Endothelial cell of umbilical vein (primary cell): ENCODE measurements at regions of chr9 and their contacts with region 1.

Region 1: GRCh38 chr9:677461-678097 is 163.9 kb upstream of the DMRT1 start:
- DNase-seq: peak; percentile 74
- H3K4me3 ChIP-seq: peak overlapping the region; percentile 20 to 55 (median 29)
- H3K27ac ChIP-seq: peak overlapping the region; percentile 44
- H3K4me1 ChIP-seq: peaks cover 26% of the 10 kb centered on the region
- H3K27me3 ChIP-seq: no peaks in the 10 kb centered on the region
- CTCF ChIP-seq: no peak
- POLR2A ChIP-seq: peak; percentile 42

Region 2: GRCh38 chr9:517993-518392 is 159.6 kb before region 1 on chr9:
- CTCF ChIA-PET with region 1: no interaction called
- POLR2A ChIA-PET with region 1: no interaction called
- dilution Hi-C with region 1: no loop called
- intact Hi-C with region 1: no loop called
- DNase-seq: no peak
- H3K4me3 ChIP-seq: no peak overlapping the region
- H3K27ac ChIP-seq: no peak overlapping the region
- H3K4me1 ChIP-seq: no peaks in the 10 kb centered on the region
- H3K27me3 ChIP-seq: no peaks in the 10 kb centered on the region
- CTCF ChIP-seq: no peak
- POLR2A ChIP-seq: no peak

Region 3: GRCh38 chr9:751137-752051 is 73.8 kb after region 1 on chr9:
- CTCF ChIA-PET with region 1: interaction called, 20 read pairs
- POLR2A ChIA-PET with region 1: no interaction called
- dilution Hi-C with region 1: no loop called
- intact Hi-C with region 1: loop called (anchors 1 kb)
- DNase-seq: no peak
- H3K4me3 ChIP-seq: no peak overlapping the region
- H3K27ac ChIP-seq: peak overlapping the region; percentile 50
- H3K4me1 ChIP-seq: peaks cover 36% of the 10 kb centered on the region
- H3K27me3 ChIP-seq: no peaks in the 10 kb centered on the region
- CTCF ChIP-seq: no peak
- POLR2A ChIP-seq: no peak